ENCODE measurements at regions of chr12 and their contacts with region 1.

Region 1: GRCh38 chr12:123365025-123365917 is 624 bp upstream of the SBNO1 start:
- DNase-seq: peak; percentile 98
- H3K4me3 Mint-ChIP-seq: peak overlapping the region; percentile 85
- H3K27ac Mint-ChIP-seq: peak overlapping the region; percentile 99
- H3K4me1 Mint-ChIP-seq: peaks cover 24% of the 10 kb centered on the region
- H3K27me3 Mint-ChIP-seq: no peaks in the 10 kb centered on the region

Region 2: GRCh38 chr12:122974274-122974891 is 390.9 kb before region 1 on chr12:
- CTCF ChIA-PET with region 1: no interaction called
- intact Hi-C with region 1: loop called (anchors 2 kb)
- DNase-seq: peak; percentile 100
- H3K4me3 Mint-ChIP-seq: peak overlapping the region; percentile 90
- H3K27ac Mint-ChIP-seq: peak overlapping the region; percentile 100
- H3K4me1 Mint-ChIP-seq: peaks cover 33% of the 10 kb centered on the region
- H3K27me3 Mint-ChIP-seq: no peaks in the 10 kb centered on the region

Region 3: DNA sequence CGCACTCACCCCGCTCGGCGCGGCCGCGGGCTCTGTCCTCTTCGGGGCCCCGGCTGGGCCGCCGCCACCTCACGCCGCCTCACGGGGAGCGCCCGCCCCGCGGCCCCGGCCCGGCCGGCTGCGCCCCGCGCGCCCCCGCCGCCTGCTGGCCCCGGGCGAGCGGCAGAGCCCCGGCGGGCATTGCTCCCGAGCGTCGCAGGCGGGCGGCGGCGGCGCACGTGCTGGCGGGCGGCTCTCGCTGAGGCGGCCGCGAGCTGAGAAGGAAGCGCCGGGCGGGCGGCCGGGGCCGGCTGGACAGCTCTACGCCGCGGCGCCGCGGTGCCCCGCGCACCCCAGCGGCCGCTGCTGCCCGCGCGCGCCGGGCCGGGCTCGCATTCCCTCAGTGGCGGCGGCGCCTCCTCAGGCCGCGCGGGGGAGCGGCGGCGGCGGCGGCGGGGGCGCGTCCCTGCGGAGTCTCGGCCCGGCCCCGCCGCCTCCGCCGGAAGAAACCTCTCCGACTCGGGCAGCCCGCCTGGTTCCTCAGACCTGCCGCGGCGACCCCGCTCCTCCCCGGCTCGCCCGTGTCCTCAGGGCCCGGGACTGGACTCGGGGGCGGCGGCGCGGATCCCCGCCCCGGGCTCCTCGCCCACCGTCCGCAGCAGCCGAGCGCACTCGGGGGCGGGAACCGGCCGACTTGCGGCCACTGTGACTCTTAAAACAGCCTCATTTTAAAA is 214.4 kb before region 1 on chr12 and contains the start of gene PITPNM2:
- CTCF ChIA-PET with region 1: no interaction called
- intact Hi-C with region 1: loop called (anchors 1 kb)
- DNase-seq: peak; percentile 63
- H3K4me3 Mint-ChIP-seq: peak within 1 kb of the TSS; percentile 77
- H3K27ac Mint-ChIP-seq: peak within 1 kb of the TSS; percentile 75
- H3K4me1 Mint-ChIP-seq: peaks cover 29% of the 10 kb centered on the region
- H3K27me3 Mint-ChIP-seq: no peaks in the 10 kb centered on the region
- total RNA-seq, gene PITPNM2: 15.4 TPM

Region 4: GRCh38 chr12:123382684-123383083 is 17.4 kb after region 1 on chr12:
- CTCF ChIA-PET with region 1: interaction called, 3 read pairs
- intact Hi-C with region 1: loop called (anchors 1 kb)
- DNase-seq: no peak
- H3K4me3 Mint-ChIP-seq: peak overlapping the region; percentile 45
- H3K27ac Mint-ChIP-seq: peak overlapping the region; percentile 41
- H3K4me1 Mint-ChIP-seq: peaks cover 7% of the 10 kb centered on the region
- H3K27me3 Mint-ChIP-seq: no peaks in the 10 kb centered on the region

Region 5: GRCh38 chr12:123445388-123446351 is 80.4 kb after region 1 on chr12:
- CTCF ChIA-PET with region 1: interaction called, 4 read pairs
- intact Hi-C with region 1: loop called (anchors 1 kb)
- DNase-seq: no peak
- H3K4me3 Mint-ChIP-seq: no peak overlapping the region
- H3K27ac Mint-ChIP-seq: peak overlapping the region; percentile 21
- H3K4me1 Mint-ChIP-seq: peaks cover 35% of the 10 kb centered on the region
- H3K27me3 Mint-ChIP-seq: no peaks in the 10 kb centered on the region

Region 6: GRCh38 chr12:123633379-123634141 is 268.3 kb after region 1 on chr12 and contains the starts of genes EIF2B1 and GTF2H3:
- CTCF ChIA-PET with region 1: no interaction called
- intact Hi-C with region 1: loop called (anchors 1 kb)
- DNase-seq: peak; percentile 99
- H3K4me3 Mint-ChIP-seq: peak within 1 kb of the TSS; percentile 99
- H3K27ac Mint-ChIP-seq: peak within 1 kb of the TSS; percentile 94
- H3K4me1 Mint-ChIP-seq: peaks cover 33% of the 10 kb centered on the region
- H3K27me3 Mint-ChIP-seq: no peaks in the 10 kb centered on the region
- total RNA-seq, gene EIF2B1: 54.3 to 60.9 TPM
- total RNA-seq, gene GTF2H3: 56.6 to 57.7 TPM

Region 7: DNA sequence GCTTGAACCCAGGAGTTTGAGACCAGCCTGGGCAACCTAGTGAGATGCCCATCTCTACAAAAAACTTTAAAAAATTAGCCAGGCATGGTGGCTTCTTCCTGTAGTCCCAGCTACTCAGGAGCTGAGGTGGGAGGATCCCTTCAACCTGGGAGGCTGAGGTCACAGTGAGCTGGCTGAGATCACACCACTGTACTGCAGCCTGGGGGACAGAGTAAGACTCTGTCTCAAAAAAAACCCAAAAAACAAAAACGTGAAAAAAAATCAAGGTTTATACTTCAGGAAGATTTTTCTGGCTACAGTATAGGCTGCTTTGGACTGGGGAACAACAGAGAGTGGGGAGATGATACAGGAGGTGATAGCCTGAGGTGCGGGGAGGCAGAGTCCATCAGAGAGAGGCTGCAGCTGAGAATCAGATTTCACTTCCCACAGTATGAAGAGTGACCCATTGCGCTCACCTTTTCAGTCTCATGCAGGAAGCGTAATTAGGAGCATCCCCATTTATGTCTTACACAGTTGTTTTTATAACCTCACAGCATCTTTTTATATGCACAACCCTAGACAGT is 425.7 kb after region 1 on chr12:
- CTCF ChIA-PET with region 1: no interaction called
- intact Hi-C with region 1: no loop called
- DNase-seq: no peak
- H3K4me3 Mint-ChIP-seq: no peak overlapping the region
- H3K27ac Mint-ChIP-seq: no peak overlapping the region
- H3K4me1 Mint-ChIP-seq: no peaks in the 10 kb centered on the region
- H3K27me3 Mint-ChIP-seq: no peaks in the 10 kb centered on the region

Region 8: DNA sequence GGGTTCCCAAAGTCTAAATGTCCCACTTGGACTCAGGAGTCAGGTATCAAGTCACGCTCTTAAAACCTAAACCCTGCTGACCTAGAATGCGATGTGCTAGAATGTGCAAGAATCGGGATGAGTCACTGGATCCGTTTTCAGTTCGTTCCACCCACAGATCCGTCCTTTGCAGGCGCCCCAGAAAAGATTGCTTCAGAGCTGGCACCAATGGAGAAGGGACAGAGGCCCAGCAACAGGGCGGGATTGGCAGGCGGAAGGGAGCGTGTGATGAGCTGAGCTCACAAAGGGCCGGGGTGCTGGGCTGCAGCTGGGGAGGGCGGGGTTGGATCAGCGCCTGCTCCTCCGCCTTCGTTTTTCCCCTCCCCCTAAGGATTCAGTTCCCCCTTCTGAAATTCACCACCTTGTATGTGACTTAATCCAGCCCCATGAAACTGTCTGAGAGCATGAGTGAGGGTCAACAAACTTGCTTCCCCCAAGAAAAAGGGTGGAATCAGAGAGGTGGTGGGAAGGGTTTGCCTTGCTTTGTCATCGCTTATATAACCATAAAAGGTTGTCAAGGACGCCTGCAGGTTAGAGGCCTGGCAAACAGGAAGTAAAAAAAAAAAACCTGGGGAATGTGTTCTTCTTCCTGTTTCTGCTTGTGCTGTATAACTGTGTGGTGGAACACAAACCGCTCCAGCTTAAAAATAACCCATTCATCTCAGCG is 1552.0 kb after region 1 on chr12:
- CTCF ChIA-PET with region 1: no interaction called
- intact Hi-C with region 1: loop called (anchors 5 kb)
- DNase-seq: peak; percentile 98
- H3K4me3 Mint-ChIP-seq: peak overlapping the region; percentile 73
- H3K27ac Mint-ChIP-seq: peak overlapping the region; percentile 100
- H3K4me1 Mint-ChIP-seq: peaks cover 83% of the 10 kb centered on the region
- H3K27me3 Mint-ChIP-seq: peaks cover 6% of the 10 kb centered on the region

Measured in activated naive CD4-positive, alpha-beta T cell treated with anti-CD3 and anti-CD28 coated beads for 36 hours (primary cell).